ENCODE measurements at regions of chr15 and their contacts with region 1.

Region 1: GRCh38 chr15:95994418-95994817 is 336.1 kb upstream of the NR2F2 start:
- DNase-seq: no peak
- H3K4me3 ChIP-seq: no peak overlapping the region
- H3K27ac ChIP-seq: no peak overlapping the region
- H3K4me1 ChIP-seq: peaks cover 0 to 11% (median 5%) of the 10 kb centered on the region in 4 donors
- H3K27me3 ChIP-seq: no peaks in the 10 kb centered on the region
- CTCF ChIP-seq: no peak

Region 2: DNA sequence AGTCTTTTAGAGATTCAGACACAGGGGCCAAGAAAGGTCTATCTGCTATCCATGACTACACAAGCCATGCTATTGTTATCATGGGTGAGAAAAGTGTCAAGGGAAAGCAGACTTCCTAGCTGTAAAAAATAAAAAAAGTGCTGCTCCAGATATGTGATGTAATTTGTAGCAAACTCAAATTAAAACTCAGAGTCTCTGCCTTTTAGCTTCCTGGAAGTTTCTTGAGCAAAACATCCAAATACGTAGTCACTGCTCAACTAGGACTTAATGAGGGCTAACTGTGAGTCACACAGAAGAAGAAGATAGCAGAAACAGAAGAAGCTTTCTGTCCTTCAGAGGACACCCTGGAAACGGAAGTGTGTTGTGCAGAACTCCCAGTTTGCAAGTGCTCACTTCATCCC is 57.3 kb before region 1 on chr15:
- intact Hi-C with region 1: no loop called
- DNase-seq: no peak
- H3K4me3 ChIP-seq: no peak overlapping the region
- H3K27ac ChIP-seq: peak overlapping the region in 1 of 2 donors; percentile 62
- H3K4me1 ChIP-seq: peaks cover 0 to 23% (median 2%) of the 10 kb centered on the region in 4 donors
- H3K27me3 ChIP-seq: no peaks in the 10 kb centered on the region
- CTCF ChIP-seq: no peak

Region 3: GRCh38 chr15:96303503-96304056 is 309.2 kb after region 1 on chr15:
- intact Hi-C with region 1: loop called (anchors 10 kb)
- DNase-seq: no peak
- H3K4me3 ChIP-seq: no peak overlapping the region
- H3K27ac ChIP-seq: no peak overlapping the region
- H3K4me1 ChIP-seq: peaks cover 0 to 21% (median under 1%) of the 10 kb centered on the region in 4 donors
- H3K27me3 ChIP-seq: no peaks in the 10 kb centered on the region
- CTCF ChIP-seq: no peak